T-cell (primary cell): ENCODE measurements at regions of chr1 and their contacts with region 1.

Region 1: GRCh38 chr1:109446085-109446695 is 19.9 kb upstream of the PSMA5 start:
- DNase-seq: no peak
- ATAC-seq: no peak
- H3K4me3 ChIP-seq: no peak overlapping the region
- H3K4me3 Mint-ChIP-seq: no peak overlapping the region
- H3K27ac ChIP-seq: no peak overlapping the region
- H3K27ac Mint-ChIP-seq: no peak overlapping the region
- H3K4me1 ChIP-seq: no peaks in the 10 kb centered on the region
- H3K4me1 Mint-ChIP-seq: no peaks in the 10 kb centered on the region
- H3K27me3 ChIP-seq: peaks cover 11 to 19% of the 10 kb centered on the region in 2 experiments
- H3K27me3 Mint-ChIP-seq: peaks cover 21 to 39% of the 10 kb centered on the region in 2 donors

Region 2: DNA sequence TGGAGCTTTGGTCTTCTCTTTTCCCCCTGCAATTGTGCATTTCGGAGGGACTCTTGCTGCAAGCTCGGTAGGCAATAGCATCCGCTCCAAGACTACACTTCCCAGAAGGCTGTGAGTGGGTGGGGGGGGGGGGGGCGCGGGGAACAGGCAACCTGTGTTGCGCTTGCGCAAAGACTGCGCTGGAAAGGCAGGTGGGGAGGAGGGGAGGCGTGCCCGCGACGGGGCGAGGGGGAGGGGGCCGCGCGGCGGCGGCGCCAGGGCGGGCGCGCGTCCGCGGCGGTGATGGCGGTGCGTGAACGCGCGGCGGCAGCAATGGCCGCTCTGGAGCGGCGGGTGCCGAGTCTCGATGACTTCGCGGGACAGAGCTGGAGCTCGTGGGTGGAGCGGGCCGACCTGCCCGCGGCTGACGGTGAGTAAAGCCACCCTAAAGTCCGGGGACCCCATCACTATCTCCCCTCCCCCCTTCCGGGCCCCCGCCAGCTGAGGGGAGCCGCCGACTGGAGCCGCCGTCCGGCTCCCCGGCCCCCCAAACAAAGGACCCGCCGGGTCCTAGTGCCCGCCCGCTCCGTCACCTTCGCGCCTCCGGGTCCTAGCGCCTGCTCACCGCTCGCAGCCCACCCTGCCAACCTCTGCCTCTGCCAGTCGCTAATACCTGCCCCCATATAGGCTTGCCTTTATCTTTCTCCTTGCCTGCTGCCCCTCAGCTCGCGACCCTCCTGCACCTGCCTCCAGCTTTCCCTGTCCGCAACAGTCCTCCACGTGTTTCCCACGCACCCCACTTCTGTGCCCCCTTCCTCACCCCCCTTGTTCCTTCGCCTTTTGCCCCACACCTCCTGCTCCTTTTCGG is 37.7 kb after region 1 on chr1 and contains the start of gene ATXN7L2:
- CTCF ChIA-PET with region 1: no interaction called
- POLR2A ChIA-PET with region 1: interaction called in 1 of 2 experiments, 11 read pairs
- DNase-seq: peak; percentile 82 to 97 (median 92)
- ATAC-seq: peak; percentile 79 to 86 (median 84)
- H3K4me3 ChIP-seq: peak within 1 kb of the TSS; percentile 80 to 84
- H3K4me3 Mint-ChIP-seq: peak within 1 kb of the TSS; percentile 92 to 96 (median 92)
- H3K27ac ChIP-seq: peak within 1 kb of the TSS; percentile 86
- H3K27ac Mint-ChIP-seq: peak within 1 kb of the TSS; percentile 92 to 93
- H3K4me1 ChIP-seq: peaks cover 12 to 24% of the 10 kb centered on the region in 2 experiments
- H3K4me1 Mint-ChIP-seq: peaks cover 32 to 37% (median 35%) of the 10 kb centered on the region in 3 donors
- H3K27me3 ChIP-seq: peaks cover 0 to 6% of the 10 kb centered on the region in 2 experiments
- H3K27me3 Mint-ChIP-seq: peaks cover under 1 to 12% of the 10 kb centered on the region in 2 donors
- total RNA-seq, gene ATXN7L2: 9.7 to 13.2 (median 12.5) TPM